ENCODE measurements at regions of chr18 and their contacts with region 1.

Region 1: DNA sequence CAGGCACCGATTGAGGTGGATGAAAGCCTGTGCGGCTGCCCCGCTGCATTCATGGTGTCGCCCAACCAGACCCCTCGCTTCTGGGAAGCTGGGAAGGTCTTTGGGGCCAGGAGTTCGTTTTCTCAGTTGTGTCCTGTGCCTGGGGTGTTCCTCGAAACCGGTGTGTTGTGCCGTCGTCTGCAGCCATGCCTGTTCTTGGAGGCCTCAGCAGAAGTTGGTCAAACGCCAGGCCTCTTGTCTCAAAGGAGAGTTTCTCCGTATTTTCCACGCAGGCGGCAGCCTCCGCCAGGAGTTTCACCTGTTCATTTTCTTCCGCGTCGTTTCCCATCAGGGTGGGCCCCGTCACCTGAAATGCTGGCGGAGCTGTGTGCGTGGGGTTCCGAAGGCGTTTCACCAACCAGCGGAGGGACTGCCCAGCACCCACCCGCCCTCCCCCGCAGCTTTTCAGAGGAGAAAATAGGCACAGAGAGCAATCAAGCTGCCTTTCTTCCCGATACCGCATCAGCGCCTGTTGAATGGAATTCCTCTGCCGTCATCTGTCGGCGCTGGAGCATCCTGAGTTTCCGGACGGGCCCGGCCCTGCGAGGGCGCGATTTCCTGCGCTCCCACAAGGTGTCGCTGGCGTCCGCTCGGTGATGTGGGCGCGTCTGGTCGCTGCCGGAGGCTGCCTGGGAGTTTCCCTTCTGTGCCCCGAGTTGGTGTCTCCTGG is 17.0 kb upstream of the NFATC1 start:
- DNase-seq: peak; percentile 90
- H3K4me3 Mint-ChIP-seq: no peak overlapping the region
- H3K27ac Mint-ChIP-seq: no peak overlapping the region
- H3K4me1 Mint-ChIP-seq: peaks cover 15% of the 10 kb centered on the region
- H3K27me3 Mint-ChIP-seq: no peaks in the 10 kb centered on the region

Region 2: GRCh38 chr18:79507076-79507545 is 128.4 kb after region 1 on chr18:
- CTCF ChIA-PET with region 1: no interaction called
- POLR2A ChIA-PET with region 1: no interaction called
- intact Hi-C with region 1: no loop called
- DNase-seq: peak; percentile 42
- H3K4me3 Mint-ChIP-seq: peak overlapping the region; percentile 37
- H3K27ac Mint-ChIP-seq: peak overlapping the region; percentile 75
- H3K4me1 Mint-ChIP-seq: peaks cover 60% of the 10 kb centered on the region
- H3K27me3 Mint-ChIP-seq: no peaks in the 10 kb centered on the region

Region 3: GRCh38 chr18:79644006-79644665 is 265.4 kb after region 1 on chr18:
- CTCF ChIA-PET with region 1: interaction called, 89 read pairs
- POLR2A ChIA-PET with region 1: no interaction called
- intact Hi-C with region 1: loop called (anchors 1 kb)
- DNase-seq: peak; percentile 80
- H3K4me3 Mint-ChIP-seq: no peak overlapping the region
- H3K27ac Mint-ChIP-seq: no peak overlapping the region
- H3K4me1 Mint-ChIP-seq: no peaks in the 10 kb centered on the region
- H3K27me3 Mint-ChIP-seq: peaks cover 9% of the 10 kb centered on the region